ENCODE measurements at regions of chr15 and their contacts with region 1.

Region 1: GRCh38 chr15:86837294-86838061 is 757.8 kb downstream of the AGBL1 start:
- DNase-seq: no peak
- ATAC-seq: peak in 5 of 8 donors; percentile 7 to 72 (median 57)
- H3K4me3 ChIP-seq: no peak overlapping the region
- H3K27ac ChIP-seq: peak overlapping the region in 2 of 10 donors; percentile 13 to 32
- H3K4me1 ChIP-seq: peaks cover 0 to 42% (median 18%) of the 10 kb centered on the region in 9 donors
- H3K27me3 ChIP-seq: no peaks in the 10 kb centered on the region
- CTCF ChIP-seq: no peak

Region 2: DNA sequence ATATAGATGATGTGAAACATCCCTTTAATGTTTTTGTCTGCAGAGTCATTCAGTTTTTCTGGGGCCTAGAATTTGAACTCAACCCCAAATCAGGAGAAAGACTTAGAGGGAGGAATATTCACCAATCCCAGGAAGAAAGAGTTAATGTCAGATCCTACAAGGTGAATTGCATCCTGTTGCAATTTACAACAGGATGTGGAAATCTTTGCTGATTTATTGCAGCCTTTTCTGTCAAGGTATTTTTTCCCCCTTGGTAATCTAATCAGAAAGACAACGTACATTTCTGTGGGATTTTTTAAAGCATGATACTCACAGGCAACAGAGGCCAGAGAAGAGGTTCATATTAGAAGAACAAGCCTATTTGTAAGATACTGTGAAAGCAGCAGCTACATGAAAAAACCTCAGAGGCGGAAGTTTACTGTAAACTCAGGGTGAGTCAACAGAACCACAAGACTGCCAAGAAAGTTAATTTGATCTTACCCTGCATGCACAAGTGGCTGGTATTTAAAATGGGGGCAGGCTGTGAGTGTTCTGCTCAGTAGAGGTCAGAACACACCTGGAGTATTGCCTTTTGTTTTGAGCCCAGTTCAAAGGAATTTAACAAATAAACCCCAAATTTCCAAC is 225.9 kb before region 1 on chr15:
- intact Hi-C with region 1: no loop called
- DNase-seq: no peak
- ATAC-seq: no peak
- H3K4me3 ChIP-seq: no peak overlapping the region
- H3K27ac ChIP-seq: no peak overlapping the region
- H3K4me1 ChIP-seq: no peaks in the 10 kb centered on the region
- H3K27me3 ChIP-seq: peaks cover 0 to 6% (median 0%) of the 10 kb centered on the region in 7 donors
- CTCF ChIP-seq: no peak

Region 3: DNA sequence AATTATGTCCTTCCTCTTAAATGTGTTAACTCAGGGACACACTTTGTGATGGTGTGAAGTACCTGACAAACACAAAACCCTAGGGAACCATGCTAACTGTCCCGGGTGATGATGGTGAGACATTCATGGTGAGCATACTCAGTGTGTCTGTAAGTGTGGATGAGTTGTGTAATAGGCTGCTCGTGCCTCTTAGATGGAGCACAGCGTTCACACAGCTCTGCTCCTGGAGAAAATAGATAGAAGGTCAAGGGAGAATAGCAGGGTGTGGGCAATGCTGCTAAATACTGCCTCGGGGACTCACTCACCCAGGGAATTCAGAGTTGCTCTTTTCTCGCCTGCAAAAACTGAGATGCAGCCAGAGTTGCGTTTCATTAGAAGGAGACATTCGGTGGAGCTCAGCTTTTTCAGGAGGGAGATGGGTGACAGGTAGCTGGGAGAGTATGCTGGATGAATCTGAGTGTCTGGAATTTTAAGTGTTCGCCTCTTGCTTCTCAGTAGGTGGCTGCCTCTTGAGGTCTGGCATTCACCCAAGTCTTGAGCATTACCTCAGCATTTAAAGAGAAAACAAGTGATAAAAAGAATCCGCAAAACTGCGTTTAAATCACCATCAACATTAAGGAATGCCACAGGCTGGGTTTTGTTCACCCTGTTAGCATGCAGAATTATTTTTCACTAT is 55.4 kb after region 1 on chr15:
- intact Hi-C with region 1: loop called in 1 of 10 experiments (anchors 10 kb)
- DNase-seq: no peak
- ATAC-seq: peak in 4 of 8 donors; percentile 29 to 50 (median 46)
- H3K4me3 ChIP-seq: no peak overlapping the region
- H3K27ac ChIP-seq: no peak overlapping the region
- H3K4me1 ChIP-seq: peaks cover 0 to 12% (median 0%) of the 10 kb centered on the region in 9 donors
- H3K27me3 ChIP-seq: no peaks in the 10 kb centered on the region
- CTCF ChIP-seq: no peak